SK-N-SH (cell line): ENCODE measurements at regions of chr1 and their contacts with region 1.

Region 1: DNA sequence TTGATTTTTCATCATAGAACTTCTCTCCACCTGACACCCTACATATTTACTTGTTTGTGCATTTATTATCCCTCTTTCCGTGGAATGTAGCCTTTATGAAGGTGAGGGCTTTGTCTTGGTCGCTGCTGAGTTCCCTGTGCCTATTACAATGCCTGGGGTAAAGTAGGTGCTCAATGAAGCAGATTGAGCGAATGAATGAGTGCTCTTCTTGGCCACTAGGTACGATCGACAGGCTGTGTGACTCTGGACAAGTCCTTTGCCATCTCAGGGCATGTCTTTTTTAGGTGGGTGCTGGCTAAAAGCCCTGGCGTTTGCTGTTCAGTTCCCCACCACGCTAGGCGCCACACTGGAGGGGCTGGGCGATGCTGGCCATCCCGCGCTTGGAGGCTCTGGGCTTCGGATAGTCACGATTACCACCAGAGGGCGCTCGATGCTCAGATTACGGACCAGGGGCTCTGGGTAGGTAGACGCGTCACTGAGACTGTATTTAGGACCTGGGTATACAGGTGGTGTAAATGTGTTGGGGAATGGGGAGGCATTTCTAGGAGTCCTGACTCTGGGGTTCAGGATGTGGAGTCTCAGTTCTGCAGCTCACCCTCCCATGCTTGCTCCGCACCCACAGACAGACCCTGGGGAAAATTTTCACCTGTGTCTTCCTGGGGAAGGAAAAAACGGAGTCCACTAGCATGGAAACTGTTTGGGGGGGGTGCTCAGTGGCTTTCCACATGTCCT is 71.0 kb upstream of the CSF3R start:
- DNase-seq: peak; percentile 83
- H3K4me3 ChIP-seq: peak overlapping the region in 1 of 2 experiments; percentile 20; a peak in 1 of 4 replicates
- H3K27ac ChIP-seq: no peak overlapping the region
- H3K4me1 ChIP-seq: no peaks in the 10 kb centered on the region
- H3K27me3 ChIP-seq: no peaks in the 10 kb centered on the region
- CTCF ChIP-seq: peak; percentile 73
- EP300 ChIP-seq: no peak
- RAD21 ChIP-seq: peak; percentile 86

Region 2: DNA sequence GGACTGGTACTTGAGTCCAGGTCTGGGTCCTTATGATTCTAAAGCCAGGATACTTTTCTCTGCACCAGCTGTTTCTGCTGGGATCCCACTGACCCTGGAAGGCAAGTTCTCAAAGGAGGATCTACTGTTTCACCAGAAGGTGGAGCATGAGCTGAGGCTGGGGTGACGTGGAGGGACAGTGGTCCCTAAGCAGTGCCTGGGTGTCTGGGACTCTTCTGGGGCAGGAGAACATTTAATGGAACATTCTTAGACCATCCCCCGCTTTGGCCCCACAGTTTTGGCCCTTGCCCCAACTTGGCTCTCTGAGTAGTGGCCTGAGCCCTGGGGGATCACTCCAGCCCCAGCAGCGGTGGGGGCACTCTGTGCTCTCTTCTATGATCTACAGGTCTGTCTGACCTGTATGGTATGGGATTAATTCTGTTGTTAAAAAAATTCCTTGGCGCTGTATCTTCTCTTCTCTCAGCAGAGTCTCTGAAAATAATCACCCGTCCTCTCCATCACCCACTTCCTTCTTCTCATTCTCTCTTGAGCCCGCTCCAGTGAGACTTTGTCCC is 10.7 kb before region 1 on chr1:
- CTCF ChIA-PET with region 1: interaction called, 23 read pairs
- POLR2A ChIA-PET with region 1: no interaction called
- DNase-seq: peak; percentile 44
- H3K4me3 ChIP-seq: no peak overlapping the region; a peak in 1 of 4 replicates
- H3K27ac ChIP-seq: no peak overlapping the region
- H3K4me1 ChIP-seq: no peaks in the 10 kb centered on the region; a peak in 1 of 4 replicates
- H3K27me3 ChIP-seq: no peaks in the 10 kb centered on the region; the same call in 1 of the 2 replicates
- CTCF ChIP-seq: 0 out of 2 replicates have a peak, but pooled peaks have one; percentile 22
- EP300 ChIP-seq: no peak
- RAD21 ChIP-seq: no peak

Region 3: DNA sequence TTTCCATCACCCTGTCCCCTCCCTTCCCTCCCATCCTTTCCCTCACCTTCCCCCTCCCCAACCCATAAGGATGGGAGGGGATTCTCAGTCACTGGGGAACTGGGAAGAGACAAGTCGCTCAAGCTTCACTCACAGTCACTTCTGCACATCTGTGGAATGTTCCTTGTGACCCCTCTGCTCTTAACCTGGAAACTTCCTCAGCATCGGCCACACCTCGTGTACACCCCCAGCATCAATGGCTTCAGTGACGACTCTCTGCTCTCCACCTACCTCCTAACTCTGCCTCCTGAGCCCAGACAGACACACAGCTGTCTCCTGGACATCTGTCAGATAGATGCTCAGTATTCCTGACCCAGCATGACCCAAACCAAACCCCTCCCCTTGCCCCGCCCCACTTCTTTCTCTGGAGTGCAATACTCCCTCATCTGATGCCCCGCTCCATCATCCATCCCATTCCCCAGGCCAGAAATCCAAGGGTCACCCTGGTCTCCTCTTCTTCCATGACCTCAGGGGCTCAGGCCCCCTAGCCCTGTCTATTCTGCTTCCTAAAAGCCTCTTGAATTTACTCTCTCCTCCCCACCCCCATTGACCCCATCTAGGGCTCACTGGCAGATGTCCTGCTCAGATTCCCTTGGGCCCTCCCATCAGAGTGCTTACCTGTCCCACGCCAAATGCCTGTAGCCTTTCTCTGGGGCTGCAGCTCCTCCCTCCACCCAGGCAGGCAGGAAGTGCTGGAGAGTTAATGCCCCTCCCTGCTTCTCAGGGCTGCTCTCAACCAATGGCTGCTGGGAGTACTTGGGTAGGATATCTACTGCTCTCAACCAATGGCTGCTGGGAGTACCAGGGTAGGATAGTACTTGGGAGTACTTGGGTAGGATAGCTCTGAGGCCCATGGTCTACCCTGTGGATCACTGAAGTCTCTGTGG is 12.1 kb after region 1 on chr1:
- CTCF ChIA-PET with region 1: interaction called, 17 read pairs
- POLR2A ChIA-PET with region 1: no interaction called
- DNase-seq: no peak
- H3K4me3 ChIP-seq: no peak overlapping the region
- H3K27ac ChIP-seq: no peak overlapping the region
- H3K4me1 ChIP-seq: peaks cover 0 to 6% of the 10 kb centered on the region in 2 experiments; a peak in 1 of 4 replicates
- H3K27me3 ChIP-seq: no peaks in the 10 kb centered on the region
- CTCF ChIP-seq: no peak
- EP300 ChIP-seq: no peak
- RAD21 ChIP-seq: no peak

Region 4: DNA sequence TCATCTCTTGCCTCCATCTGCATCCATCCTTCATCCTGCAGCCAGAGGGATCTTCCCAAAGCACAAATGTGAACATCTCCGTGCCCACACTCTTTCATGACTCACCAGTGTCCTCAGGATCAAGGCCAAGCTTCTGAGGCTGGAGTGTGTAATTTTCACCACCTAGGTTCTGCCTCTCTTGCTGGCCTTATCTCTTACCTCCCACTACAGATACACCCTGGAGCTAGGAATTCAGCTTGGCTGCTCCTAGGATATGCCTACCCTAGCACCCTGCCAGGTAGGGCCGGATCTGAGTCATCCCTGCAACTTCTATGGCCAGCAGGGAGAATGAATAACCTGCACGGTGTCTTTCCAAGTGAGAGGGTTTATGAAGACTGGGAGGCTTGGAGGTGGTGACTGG is 137.6 kb after region 1 on chr1:
- CTCF ChIA-PET with region 1: no interaction called
- POLR2A ChIA-PET with region 1: no interaction called
- DNase-seq: no peak
- H3K4me3 ChIP-seq: no peak overlapping the region
- H3K27ac ChIP-seq: no peak overlapping the region
- H3K4me1 ChIP-seq: no peaks in the 10 kb centered on the region; a peak in 1 of 4 replicates
- H3K27me3 ChIP-seq: no peaks in the 10 kb centered on the region
- CTCF ChIP-seq: no peak
- EP300 ChIP-seq: no peak
- RAD21 ChIP-seq: no peak